ENCODE measurements at regions of chr7 and their contacts with region 1.

Region 1: GRCh38 chr7:31204071-31204470 is 136.5 kb downstream of the NEUROD6 start:
- ATAC-seq: no peak
- H3K4me3 ChIP-seq: no peak overlapping the region
- H3K27ac ChIP-seq: no peak overlapping the region
- H3K4me1 ChIP-seq: no peaks in the 10 kb centered on the region

Region 2: DNA sequence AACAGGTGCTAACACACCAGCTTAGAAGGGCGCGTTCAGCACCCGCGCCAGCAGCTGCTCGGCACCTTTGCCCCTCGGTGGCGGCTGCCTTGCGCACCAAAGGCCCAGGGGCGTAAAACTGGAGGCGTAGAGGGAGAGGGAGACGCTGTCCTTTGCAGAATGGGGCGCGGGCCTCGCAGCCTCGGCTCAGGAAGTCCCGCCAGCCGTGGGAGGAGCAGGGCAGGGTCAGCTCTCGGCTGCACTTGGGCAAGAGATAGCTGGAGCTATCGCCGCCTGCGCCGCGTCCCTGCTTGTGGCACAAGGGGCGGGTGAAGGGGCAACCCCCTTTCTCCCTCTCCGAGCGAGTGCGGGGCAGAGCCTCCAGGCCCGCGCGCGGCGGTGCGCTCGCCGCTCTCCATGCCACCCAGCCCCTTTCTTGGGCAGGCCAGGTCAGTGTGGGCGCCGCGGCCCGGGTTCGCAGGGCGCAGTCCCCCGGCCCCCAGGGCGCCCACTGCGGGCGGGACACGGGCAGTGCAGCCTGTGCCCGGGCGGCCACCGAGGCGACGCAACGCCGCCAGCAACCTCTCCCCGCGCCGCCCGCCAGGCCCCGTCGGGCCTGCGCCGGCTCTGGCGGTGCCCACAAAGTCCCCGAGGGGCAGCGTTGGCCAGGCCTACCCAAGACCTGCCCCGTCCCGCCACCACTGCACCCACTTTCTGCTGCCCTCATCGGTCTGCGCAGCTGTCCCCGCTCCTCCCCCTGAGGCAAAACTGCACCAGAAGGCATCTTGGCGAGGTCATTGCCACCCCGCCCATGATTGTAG is 132.3 kb after region 1 on chr7:
- in situ Hi-C with region 1: loop called in 1 of 9 experiments (anchors 25 kb)
- ATAC-seq: no peak
- H3K4me3 ChIP-seq: no peak overlapping the region
- H3K27ac ChIP-seq: no peak overlapping the region
- H3K4me1 ChIP-seq: no peaks in the 10 kb centered on the region

Measured in motor neuron (in vitro differentiated cells).